Heart right ventricle (tissue), 16 donors: ENCODE measurements at regions of chr10 and their contacts with region 1.

Region 1: DNA sequence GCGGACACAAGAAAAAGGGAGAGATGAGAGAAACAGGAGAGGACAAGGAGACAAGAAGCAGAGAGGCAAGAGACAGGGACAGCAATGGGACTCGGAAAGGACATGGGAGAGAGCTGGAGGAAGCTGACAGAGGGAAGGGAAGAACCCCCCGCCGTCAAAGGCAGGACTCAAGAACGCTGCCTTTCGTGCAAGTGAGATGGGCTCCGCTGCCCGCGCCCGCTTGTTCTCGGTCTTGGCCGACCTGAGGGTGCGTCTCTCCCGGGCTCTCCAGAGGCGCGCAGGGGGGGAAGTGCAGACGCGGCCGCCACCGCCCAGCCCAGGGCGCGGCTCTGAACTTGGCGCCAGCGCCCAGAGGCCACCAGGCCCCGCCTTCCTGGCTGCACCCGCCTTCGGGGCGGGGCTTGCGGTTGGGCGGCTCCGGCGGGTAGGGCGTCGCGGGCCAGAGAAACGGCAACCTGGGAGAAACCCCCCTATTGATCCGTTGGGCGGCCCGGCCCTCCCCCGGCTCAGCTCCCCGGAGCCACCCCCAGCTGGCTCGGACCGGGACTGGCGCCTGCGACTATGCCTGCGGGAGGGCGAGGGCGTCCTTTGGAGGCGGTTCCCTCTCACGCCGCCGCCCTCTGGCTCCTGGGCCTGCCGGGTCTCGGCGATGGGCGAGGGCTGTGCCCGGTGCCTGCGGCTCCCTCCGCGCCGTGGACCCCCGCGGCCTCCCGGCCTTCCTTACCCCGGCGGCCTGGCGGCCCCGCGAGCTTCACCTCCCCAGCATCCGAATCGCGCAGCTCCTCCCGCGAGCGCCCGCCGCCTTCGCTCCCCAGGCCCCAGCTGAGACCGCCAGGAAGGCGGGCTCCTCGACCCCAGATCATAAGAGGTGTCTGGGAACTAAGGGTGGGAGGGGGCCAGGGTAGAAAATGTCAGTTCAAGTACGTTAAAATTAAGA is 2.2 kb upstream of the ANTXRL start:
- DNase-seq: peak; percentile 78 to 88
- ATAC-seq: peak; percentile 91 to 97 (median 94)
- H3K4me3 ChIP-seq: peak overlapping the region; percentile 26 to 93 (median 70)
- H3K27ac ChIP-seq: peak overlapping the region; percentile 19 to 87 (median 74)
- H3K4me1 ChIP-seq: peaks cover 0 to 28% (median 14%) of the 10 kb centered on the region in 9 donors
- H3K27me3 ChIP-seq: peaks cover 0 to 6% (median 0%) of the 10 kb centered on the region in 7 donors
- CTCF ChIP-seq: no peak

Region 2: GRCh38 chr10:44830022-44830421 is 1454.5 kb before region 1 on chr10:
- intact Hi-C with region 1: no loop called
- DNase-seq: no peak
- ATAC-seq: no peak
- H3K4me3 ChIP-seq: no peak overlapping the region
- H3K27ac ChIP-seq: no peak overlapping the region
- H3K4me1 ChIP-seq: peaks cover 0 to 16% (median 0%) of the 10 kb centered on the region in 9 donors
- H3K27me3 ChIP-seq: no peaks in the 10 kb centered on the region
- CTCF ChIP-seq: no peak

Region 3: GRCh38 chr10:46106410-46107255 is 177.9 kb before region 1 on chr10:
- intact Hi-C with region 1: loop called in 1 of 10 experiments (anchors 5 kb)
- DNase-seq: peak; percentile 36 to 71
- ATAC-seq: peak; percentile 96 to 99 (median 99)
- H3K4me3 ChIP-seq: peak overlapping the region; percentile 14 to 62 (median 52)
- H3K27ac ChIP-seq: peak overlapping the region in 3 of 10 donors; percentile 31 to 34 (median 32)
- H3K4me1 ChIP-seq: peaks cover 6 to 9% (median 8%) of the 10 kb centered on the region in 9 donors
- H3K27me3 ChIP-seq: peaks cover 0 to 9% (median 0%) of the 10 kb centered on the region in 7 donors
- CTCF ChIP-seq: peak in 1 of 9 donors; percentile 11

Region 4: DNA sequence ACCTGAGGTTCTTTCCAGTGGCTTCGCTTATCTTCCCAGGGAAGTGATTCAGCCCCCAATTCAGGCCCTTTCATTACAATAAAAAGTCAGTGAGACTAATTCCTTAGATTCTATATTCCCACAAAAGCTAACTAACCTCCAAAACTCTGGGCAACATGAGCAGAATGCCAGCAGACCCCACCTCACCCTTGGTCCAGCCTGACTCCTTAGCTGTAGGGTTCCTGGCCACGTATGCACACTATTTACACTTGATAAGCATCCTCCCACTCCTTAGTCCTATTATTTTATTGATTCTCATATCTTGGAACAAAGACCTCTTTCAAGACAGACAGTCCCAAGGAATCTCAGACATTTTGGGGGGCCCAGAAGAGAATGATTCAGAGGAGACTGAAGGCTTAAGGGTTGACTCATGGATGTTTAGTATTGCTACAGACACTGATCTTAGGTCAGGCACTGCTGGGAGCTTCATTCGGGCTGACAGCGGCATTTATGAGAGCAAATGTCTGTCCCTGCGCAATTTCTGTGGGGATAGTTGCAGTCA is 852.8 kb after region 1 on chr10:
- intact Hi-C with region 1: no loop called
- DNase-seq: no peak
- ATAC-seq: no peak
- H3K4me3 ChIP-seq: no peak overlapping the region
- H3K27ac ChIP-seq: peak overlapping the region in 1 of 10 donors; percentile 47
- H3K4me1 ChIP-seq: peaks cover 0 to 8% (median 0%) of the 10 kb centered on the region in 9 donors
- H3K27me3 ChIP-seq: no peaks in the 10 kb centered on the region
- CTCF ChIP-seq: no peak

Region 5: DNA sequence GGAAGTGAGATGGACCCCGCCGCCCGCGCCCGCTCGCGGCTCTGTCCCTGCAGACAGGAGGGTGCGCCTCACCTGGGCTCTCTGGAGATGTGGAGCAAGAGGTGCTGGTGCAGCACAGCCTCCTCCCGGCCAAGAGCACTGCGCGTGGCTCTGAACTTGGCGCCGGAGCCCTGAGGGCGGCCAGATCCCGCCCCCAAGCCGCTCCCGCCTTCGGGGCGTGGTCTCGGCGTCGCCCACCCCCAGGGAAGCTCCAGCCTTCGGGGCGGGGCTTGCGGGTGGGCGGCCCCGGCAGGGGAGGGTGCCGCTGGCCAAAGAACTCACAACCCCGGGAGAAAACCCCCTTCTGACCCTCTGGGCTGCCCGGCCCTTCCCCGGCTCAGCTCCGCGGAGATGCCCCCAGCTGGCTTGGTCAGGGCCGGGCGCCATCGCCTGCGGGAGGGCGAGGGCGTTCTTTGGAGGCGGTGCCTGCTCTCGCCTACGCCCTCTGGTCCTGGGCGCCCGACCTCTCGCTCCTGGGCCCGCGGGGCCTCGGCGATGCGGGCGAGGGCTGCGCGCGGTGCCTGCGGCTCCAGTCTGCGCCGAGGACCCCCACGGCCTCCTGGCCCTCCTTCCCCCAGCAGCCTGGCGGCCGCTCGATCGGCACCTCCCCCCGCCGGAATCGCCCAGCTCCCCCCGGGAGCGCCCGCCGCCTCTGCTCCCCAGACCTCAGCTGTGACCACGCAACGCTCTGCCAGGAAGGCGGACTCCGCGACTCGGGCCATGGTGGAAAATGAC is 1099.8 kb after region 1 on chr10 and contains the start of gene ZNF488:
- intact Hi-C with region 1: loop called in 1 of 10 experiments (anchors 5 kb)
- DNase-seq: peak; percentile 78 to 86
- ATAC-seq: peak; percentile 98 to 99 (median 99)
- H3K4me3 ChIP-seq: peak within 1 kb of the TSS; percentile 57 to 96 (median 78)
- H3K27ac ChIP-seq: peak within 1 kb of the TSS in 9 of 10 donors; percentile 45 to 88 (median 75)
- H3K4me1 ChIP-seq: peaks cover 0 to 12% (median 7%) of the 10 kb centered on the region in 9 donors
- H3K27me3 ChIP-seq: peaks cover 0 to 23% (median 3%) of the 10 kb centered on the region in 7 donors
- CTCF ChIP-seq: peak in 2 of 9 donors; percentile 4 to 13
- total RNA-seq, gene ZNF488: 0.05 to 0.14 (median 0.11) TPM in 4 of 10 donors, not detected in the others